ENCODE measurements at regions of chr6 and their contacts with region 1.

Region 1: DNA sequence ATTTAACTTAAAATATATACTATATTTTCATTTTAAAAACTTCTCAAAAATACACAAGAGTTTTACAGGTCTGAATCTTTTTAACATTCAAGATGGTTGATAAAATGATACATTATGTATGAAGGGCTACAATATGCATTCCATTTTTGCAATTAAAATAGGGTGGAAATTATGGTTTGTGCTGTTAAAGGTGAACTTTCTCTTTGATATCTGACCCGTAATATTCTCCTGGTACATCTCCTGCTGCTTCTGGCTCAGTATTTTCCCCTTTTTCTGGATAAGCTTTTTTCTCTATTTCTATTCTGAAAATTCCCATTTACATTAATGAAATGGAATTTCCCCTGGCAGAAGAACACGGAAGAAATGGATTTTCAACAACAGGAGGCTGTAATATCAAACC is 27.4 kb upstream of the LCA5 start:
- DNase-seq: no peak
- ATAC-seq: no peak
- H3K4me3 ChIP-seq: no peak overlapping the region
- H3K27ac ChIP-seq: no peak overlapping the region
- H3K4me1 ChIP-seq: no peaks in the 10 kb centered on the region
- H3K27me3 ChIP-seq: no peaks in the 10 kb centered on the region
- CTCF ChIP-seq: no peak

Region 2: GRCh38 chr6:79719248-79719960 is 154.8 kb after region 1 on chr6:
- intact Hi-C with region 1: loop called in 1 of 10 experiments (anchors 5 kb)
- DNase-seq: no peak
- ATAC-seq: peak in 3 of 8 donors; percentile 22 to 31 (median 28)
- H3K4me3 ChIP-seq: no peak overlapping the region
- H3K27ac ChIP-seq: no peak overlapping the region
- H3K4me1 ChIP-seq: peaks cover 0 to 1% (median 0%) of the 10 kb centered on the region in 9 donors
- H3K27me3 ChIP-seq: no peaks in the 10 kb centered on the region
- CTCF ChIP-seq: no peak

Region 3: GRCh38 chr6:79813854-79814709 is 249.4 kb after region 1 on chr6:
- intact Hi-C with region 1: loop called in 1 of 10 experiments (anchors 10 kb)
- DNase-seq: peak; percentile 33 to 70
- ATAC-seq: peak in 6 of 8 donors; percentile 53 to 75 (median 68)
- H3K4me3 ChIP-seq: no peak overlapping the region
- H3K27ac ChIP-seq: no peak overlapping the region
- H3K4me1 ChIP-seq: no peaks in the 10 kb centered on the region
- H3K27me3 ChIP-seq: no peaks in the 10 kb centered on the region
- CTCF ChIP-seq: peak; percentile 64 to 92 (median 85)